Activated CD4-positive, alpha-beta T cell treated with anti-CD3 and anti-CD28 coated beads, Interleukin-2, amount 10 ng/mL, durations not matched to agents 24 days and 14 days (primary cell): ENCODE measurements at regions of chr5 and their contacts with region 1.

Region 1: GRCh38 chr5:158543539-158544387 is 556.0 kb downstream of the EBF1 start:
- DNase-seq: no peak
- H3K4me3 Mint-ChIP-seq: no peak overlapping the region
- H3K27ac Mint-ChIP-seq: no peak overlapping the region
- H3K4me1 Mint-ChIP-seq: peaks cover 14% of the 10 kb centered on the region
- H3K27me3 Mint-ChIP-seq: peaks cover 6% of the 10 kb centered on the region

Region 2: DNA sequence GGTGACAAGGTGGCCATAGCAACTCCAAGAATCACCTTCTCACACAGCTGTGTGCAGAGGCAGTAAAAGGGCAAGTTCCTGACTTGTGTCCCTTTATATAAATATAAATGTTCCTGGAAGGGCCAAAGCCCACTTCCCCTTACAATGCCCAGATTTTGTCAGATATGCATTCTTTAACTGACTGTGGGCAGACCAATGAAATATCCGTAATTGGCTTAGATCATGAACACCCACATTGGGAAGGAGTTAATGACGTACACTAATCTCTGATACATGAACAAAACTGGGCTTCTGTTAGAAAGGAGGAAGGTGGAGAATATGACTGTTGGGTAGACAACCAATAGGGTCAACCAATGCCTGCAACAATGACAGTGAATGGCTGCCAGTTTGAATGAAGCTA is 287.7 kb before region 1 on chr5:
- intact Hi-C with region 1: no loop called
- DNase-seq: no peak
- H3K4me3 Mint-ChIP-seq: no peak overlapping the region
- H3K27ac Mint-ChIP-seq: no peak overlapping the region
- H3K4me1 Mint-ChIP-seq: no peaks in the 10 kb centered on the region
- H3K27me3 Mint-ChIP-seq: no peaks in the 10 kb centered on the region

Region 3: DNA sequence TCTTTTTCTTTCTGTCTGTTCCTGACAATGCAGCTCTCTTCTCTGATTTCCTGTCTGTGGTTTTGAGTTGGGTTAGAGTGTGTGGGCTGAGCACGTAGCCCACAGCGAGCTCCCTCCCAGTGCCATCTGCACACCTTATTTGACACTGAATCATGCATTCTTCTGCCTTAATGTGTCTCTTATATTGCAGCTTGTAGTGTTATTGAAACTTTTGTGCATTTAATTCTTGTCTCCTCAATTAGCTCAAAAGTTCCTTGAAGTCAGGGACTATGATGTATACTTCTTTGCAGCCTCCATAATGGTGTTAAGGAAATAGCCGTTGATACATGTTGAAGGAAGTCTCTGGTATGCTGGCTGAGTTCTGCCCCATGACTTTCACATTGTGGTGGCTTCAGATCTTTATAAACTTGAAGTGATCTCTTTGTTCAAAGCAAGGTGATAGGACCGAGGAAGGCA is 108.6 kb before region 1 on chr5:
- intact Hi-C with region 1: loop called (anchors 2 kb)
- DNase-seq: peak; percentile 81
- H3K4me3 Mint-ChIP-seq: peak overlapping the region; percentile 76
- H3K27ac Mint-ChIP-seq: peak overlapping the region; percentile 83
- H3K4me1 Mint-ChIP-seq: peaks cover 48% of the 10 kb centered on the region
- H3K27me3 Mint-ChIP-seq: no peaks in the 10 kb centered on the region

Region 4: DNA sequence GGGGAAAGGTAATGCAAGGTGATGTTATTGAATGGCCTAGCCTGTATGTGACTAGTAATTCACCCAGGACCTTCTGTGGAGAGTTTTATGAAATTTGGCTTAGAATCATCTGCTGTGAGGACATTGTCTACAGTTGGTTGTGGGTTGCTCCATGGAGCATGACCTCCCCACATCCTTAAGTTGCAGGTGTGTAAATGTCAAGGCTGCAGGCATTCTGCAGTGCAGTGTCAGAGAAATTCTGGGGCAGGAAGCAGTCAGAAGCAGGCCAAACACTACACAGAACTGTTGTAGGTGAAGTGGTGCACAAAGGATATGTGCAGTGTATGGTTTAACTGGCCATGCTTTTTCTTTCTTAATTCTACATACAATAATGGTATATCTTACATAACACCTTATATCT is 32.3 kb before region 1 on chr5:
- intact Hi-C with region 1: loop called (anchors 2 kb)
- DNase-seq: peak; percentile 59
- H3K4me3 Mint-ChIP-seq: no peak overlapping the region
- H3K27ac Mint-ChIP-seq: no peak overlapping the region
- H3K4me1 Mint-ChIP-seq: peaks cover 29% of the 10 kb centered on the region
- H3K27me3 Mint-ChIP-seq: no peaks in the 10 kb centered on the region